ENCODE measurements at regions of chr19 and their contacts with region 1.

Region 1: DNA sequence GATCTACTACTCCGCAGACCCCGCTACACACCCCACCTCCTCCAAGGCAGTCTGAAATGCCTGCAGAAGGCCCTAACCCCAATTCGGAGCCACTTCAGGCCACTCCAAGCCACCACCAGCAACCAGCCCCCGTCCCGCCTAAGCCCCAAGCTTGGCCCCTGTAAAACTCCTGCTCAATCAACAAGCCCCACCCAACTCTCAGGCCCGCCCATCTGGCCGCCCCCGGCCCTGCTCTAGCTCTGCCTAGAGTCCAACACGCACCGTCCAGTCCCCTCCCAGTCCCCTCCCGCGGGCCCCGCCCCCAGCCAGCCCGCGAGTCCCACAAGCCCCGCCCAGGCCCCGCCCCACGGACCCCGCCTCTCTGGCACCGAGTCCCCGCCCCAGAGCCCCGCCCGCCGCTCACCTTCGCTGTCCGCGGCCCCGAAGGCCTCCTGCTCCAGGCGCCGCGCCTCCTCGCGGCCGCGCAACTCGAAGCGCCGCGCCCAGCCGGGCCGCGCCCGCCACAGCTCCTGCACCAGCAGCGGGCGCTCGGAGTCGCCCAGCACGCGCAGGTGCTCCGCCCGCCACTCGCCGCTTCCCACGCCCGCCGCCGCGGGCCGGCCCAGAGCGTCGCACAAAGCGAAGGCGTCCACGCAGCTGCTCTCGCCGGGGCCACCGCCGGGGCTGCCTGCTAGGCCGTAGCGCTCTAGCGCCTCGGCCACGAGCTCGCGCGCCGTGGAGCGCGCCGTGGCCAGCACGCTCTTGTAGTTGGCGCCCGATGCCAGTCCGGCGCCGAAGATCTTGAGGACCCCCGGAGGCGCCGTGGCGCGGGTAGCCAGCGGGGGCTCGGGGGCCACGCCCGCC is 1.6 kb downstream of the RASIP1 start:
- DNase-seq: peak; percentile 96
- H3K4me3 Mint-ChIP-seq: peak overlapping the region; percentile 56
- H3K27ac Mint-ChIP-seq: no peak overlapping the region
- H3K4me1 Mint-ChIP-seq: peaks cover 17% of the 10 kb centered on the region
- H3K27me3 Mint-ChIP-seq: peaks cover 10% of the 10 kb centered on the region

Region 2: GRCh38 chr19:48674921-48675824 is 63.6 kb before region 1 on chr19:
- CTCF ChIA-PET with region 1: interaction called, 10 read pairs
- intact Hi-C with region 1: loop called (anchors 1 kb)
- DNase-seq: peak; percentile 86
- H3K4me3 Mint-ChIP-seq: no peak overlapping the region
- H3K27ac Mint-ChIP-seq: no peak overlapping the region
- H3K4me1 Mint-ChIP-seq: peaks cover 5% of the 10 kb centered on the region
- H3K27me3 Mint-ChIP-seq: no peaks in the 10 kb centered on the region

Region 3: GRCh38 chr19:48713864-48714758 is 24.7 kb before region 1 on chr19:
- CTCF ChIA-PET with region 1: no interaction called
- intact Hi-C with region 1: loop called (anchors 1 kb)
- DNase-seq: peak; percentile 99
- H3K4me3 Mint-ChIP-seq: peak overlapping the region; percentile 86
- H3K27ac Mint-ChIP-seq: peak overlapping the region; percentile 58
- H3K4me1 Mint-ChIP-seq: peaks cover 11% of the 10 kb centered on the region
- H3K27me3 Mint-ChIP-seq: no peaks in the 10 kb centered on the region

Measured in activated naive CD4-positive, alpha-beta T cell treated with anti-CD3 and anti-CD28 coated beads for 36 hours (primary cell).